ENCODE measurements at regions of chr1 and their contacts with region 1.

Region 1: GRCh38 chr1:112369392-112370285 is 26.4 kb upstream of the CTTNBP2NL start:
- DNase-seq: peak; percentile 71 to 87 (median 83)
- ATAC-seq: peak; percentile 100
- H3K4me3 ChIP-seq: no peak overlapping the region
- H3K4me3 Mint-ChIP-seq: no peak overlapping the region
- H3K27ac ChIP-seq: no peak overlapping the region
- H3K27ac Mint-ChIP-seq: no peak overlapping the region
- H3K4me1 ChIP-seq: no peaks in the 10 kb centered on the region
- H3K4me1 Mint-ChIP-seq: peaks cover 4% of the 10 kb centered on the region
- H3K27me3 ChIP-seq: peaks cover 0 to 4% of the 10 kb centered on the region in 2 experiments
- H3K27me3 Mint-ChIP-seq: peaks cover 42% of the 10 kb centered on the region
- CTCF ChIP-seq: peak; percentile 93

Region 2: DNA sequence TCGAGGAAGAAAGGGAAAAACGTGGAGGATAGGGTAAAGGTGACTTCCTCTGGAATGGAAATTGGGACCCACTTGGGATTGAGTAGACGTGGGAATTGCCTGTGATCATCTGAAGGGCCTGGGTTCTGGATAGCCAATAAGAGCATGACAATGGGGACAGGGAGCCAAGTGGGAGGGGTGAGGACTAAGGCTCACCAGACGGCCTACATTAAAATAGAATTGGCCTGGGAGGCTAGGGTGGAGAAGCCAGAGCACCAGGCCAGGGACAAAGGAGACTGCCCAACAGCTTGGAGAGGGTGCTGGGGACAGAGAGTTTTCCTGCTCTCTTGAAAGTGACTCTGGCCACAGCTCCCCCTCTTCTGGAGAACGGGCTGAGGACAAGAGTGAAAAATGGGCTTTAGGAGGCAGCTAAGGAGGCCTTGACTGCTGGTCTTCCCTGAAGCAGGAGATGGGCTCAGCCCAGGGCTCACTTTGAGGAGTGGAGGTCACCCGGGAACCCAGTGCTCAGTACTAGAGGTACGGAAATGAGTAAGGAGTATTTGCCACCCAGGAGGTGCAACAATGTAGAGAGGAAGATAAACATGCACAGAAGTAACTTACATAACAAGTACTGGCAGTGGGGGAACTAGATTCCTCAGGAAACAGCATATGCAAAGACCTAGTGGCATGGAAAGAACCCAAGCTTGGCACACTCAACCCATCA is 649.2 kb before region 1 on chr1:
- CTCF ChIA-PET with region 1: interaction called, 3 read pairs
- POLR2A ChIA-PET with region 1: no interaction called
- intact Hi-C with region 1: loop called in 1 of 2 experiments (anchors 2 kb)
- DNase-seq: no peak
- ATAC-seq: no peak
- H3K4me3 ChIP-seq: no peak overlapping the region
- H3K4me3 Mint-ChIP-seq: no peak overlapping the region
- H3K27ac ChIP-seq: no peak overlapping the region
- H3K27ac Mint-ChIP-seq: no peak overlapping the region
- H3K4me1 ChIP-seq: no peaks in the 10 kb centered on the region
- H3K4me1 Mint-ChIP-seq: peaks cover 15% of the 10 kb centered on the region
- H3K27me3 ChIP-seq: no peaks in the 10 kb centered on the region
- H3K27me3 Mint-ChIP-seq: no peaks in the 10 kb centered on the region
- CTCF ChIP-seq: no peak

Region 3: DNA sequence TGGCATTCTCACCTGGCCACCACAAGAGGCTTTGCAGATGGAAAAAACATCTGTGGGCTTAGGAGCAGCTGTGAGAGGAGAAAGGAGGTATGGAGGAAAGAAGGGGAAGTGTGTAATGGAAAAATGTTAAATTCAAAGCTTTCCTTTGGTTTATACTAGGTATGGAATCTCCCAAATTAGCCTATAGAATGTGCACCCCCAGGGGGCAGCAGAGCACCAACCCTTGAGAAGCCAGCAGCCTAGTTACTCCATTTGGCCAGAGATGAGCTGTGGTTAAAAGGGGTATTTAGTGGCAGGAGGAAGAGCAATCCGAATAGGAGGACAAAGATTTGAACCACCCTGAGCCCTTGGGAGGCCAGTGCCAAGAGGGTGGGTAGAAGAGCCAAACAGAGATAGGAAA is 71.1 kb before region 1 on chr1:
- CTCF ChIA-PET with region 1: interaction called, 22 read pairs
- POLR2A ChIA-PET with region 1: no interaction called
- intact Hi-C with region 1: loop called (anchors 2 kb)
- DNase-seq: peak in 5 of 9 experiments; percentile 12 to 60 (median 29)
- ATAC-seq: no peak
- H3K4me3 ChIP-seq: no peak overlapping the region
- H3K4me3 Mint-ChIP-seq: no peak overlapping the region
- H3K27ac ChIP-seq: no peak overlapping the region
- H3K27ac Mint-ChIP-seq: no peak overlapping the region
- H3K4me1 ChIP-seq: no peaks in the 10 kb centered on the region
- H3K4me1 Mint-ChIP-seq: no peaks in the 10 kb centered on the region
- H3K27me3 ChIP-seq: no peaks in the 10 kb centered on the region
- H3K27me3 Mint-ChIP-seq: peaks cover 11% of the 10 kb centered on the region
- CTCF ChIP-seq: peak; percentile 40

Region 4: DNA sequence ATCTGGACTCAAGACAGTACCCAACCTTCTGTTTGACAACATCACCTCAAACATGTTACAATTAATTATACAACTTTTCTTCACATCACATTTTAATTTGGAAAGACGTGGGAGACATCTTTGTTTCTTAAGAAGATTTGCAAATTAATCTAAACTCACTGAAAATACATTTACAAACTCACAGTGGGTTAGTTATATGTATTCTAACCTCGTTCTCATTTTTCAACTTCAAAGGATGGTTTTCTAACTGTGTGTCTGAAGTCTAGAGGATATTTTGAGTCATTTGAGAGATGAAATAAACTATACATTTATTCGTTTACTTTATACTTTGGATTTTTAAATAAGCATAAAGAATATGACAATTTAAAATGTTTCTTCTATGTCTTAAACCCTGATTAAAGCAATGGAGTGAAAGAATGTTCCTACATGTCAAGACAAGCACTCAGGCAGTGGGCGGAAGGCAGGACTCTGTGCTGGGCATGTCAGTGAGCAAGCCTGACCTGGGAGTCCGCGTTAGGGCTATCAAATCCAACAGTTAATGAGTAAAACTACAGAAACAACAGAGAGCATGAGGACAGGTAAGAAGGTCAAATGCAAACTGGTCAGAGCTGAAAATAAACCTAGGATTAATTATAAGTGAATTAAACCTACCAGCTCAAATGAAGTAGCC is 50.1 kb before region 1 on chr1:
- CTCF ChIA-PET with region 1: no interaction called
- POLR2A ChIA-PET with region 1: no interaction called
- intact Hi-C with region 1: no loop called
- DNase-seq: no peak
- ATAC-seq: no peak
- H3K4me3 ChIP-seq: no peak overlapping the region
- H3K4me3 Mint-ChIP-seq: no peak overlapping the region
- H3K27ac ChIP-seq: no peak overlapping the region
- H3K27ac Mint-ChIP-seq: no peak overlapping the region
- H3K4me1 ChIP-seq: no peaks in the 10 kb centered on the region
- H3K4me1 Mint-ChIP-seq: peaks cover 2% of the 10 kb centered on the region
- H3K27me3 ChIP-seq: peaks cover 0 to 3% of the 10 kb centered on the region in 2 experiments
- H3K27me3 Mint-ChIP-seq: peaks cover 22% of the 10 kb centered on the region
- CTCF ChIP-seq: no peak

Region 5: DNA sequence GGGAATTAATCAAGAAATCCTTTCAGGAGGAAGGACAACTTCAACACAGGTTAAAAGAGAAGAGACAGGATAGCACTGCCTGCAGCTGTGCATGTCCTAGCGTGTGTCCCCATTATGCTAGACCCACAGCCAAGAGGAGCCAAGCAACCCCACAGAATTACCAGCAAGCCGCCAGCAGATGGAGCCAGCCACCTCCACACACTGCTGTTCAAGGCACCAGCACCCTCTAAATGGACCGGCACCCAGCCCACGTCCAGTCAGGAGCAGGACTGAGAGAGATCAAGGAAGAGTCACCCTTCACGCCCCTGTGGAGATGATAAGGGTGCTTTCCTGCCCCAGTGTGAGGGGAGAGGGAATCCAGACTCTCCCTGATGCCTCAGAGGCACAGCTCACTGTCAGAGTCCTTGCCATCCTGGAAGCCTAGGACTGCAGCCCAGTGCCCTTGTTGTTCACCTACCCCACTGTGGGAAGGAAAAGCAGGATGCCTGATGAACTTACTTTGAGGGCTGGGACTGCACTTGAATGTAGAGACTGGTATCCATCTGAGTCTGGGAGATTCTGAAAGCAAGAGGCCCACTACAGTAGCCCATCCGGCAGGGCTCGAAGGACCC is 10.7 kb before region 1 on chr1:
- CTCF ChIA-PET with region 1: interaction called, 50 read pairs
- POLR2A ChIA-PET with region 1: interaction called, 5 read pairs
- intact Hi-C with region 1: no loop called
- DNase-seq: peak in 4 of 9 experiments; percentile 34 to 48 (median 42)
- ATAC-seq: peak; percentile 55
- H3K4me3 ChIP-seq: no peak overlapping the region
- H3K4me3 Mint-ChIP-seq: no peak overlapping the region
- H3K27ac ChIP-seq: no peak overlapping the region
- H3K27ac Mint-ChIP-seq: no peak overlapping the region
- H3K4me1 ChIP-seq: no peaks in the 10 kb centered on the region
- H3K4me1 Mint-ChIP-seq: no peaks in the 10 kb centered on the region
- H3K27me3 ChIP-seq: no peaks in the 10 kb centered on the region
- H3K27me3 Mint-ChIP-seq: peaks cover 46% of the 10 kb centered on the region
- CTCF ChIP-seq: peak; percentile 53

Region 6: GRCh38 chr1:112383759-112384356 is 14.2 kb after region 1 on chr1:
- CTCF ChIA-PET with region 1: interaction called, 17 read pairs
- POLR2A ChIA-PET with region 1: no interaction called
- intact Hi-C with region 1: no loop called
- DNase-seq: no peak
- ATAC-seq: no peak
- H3K4me3 ChIP-seq: no peak overlapping the region
- H3K4me3 Mint-ChIP-seq: no peak overlapping the region
- H3K27ac ChIP-seq: no peak overlapping the region
- H3K27ac Mint-ChIP-seq: no peak overlapping the region
- H3K4me1 ChIP-seq: no peaks in the 10 kb centered on the region
- H3K4me1 Mint-ChIP-seq: no peaks in the 10 kb centered on the region
- H3K27me3 ChIP-seq: peaks cover 0 to 10% of the 10 kb centered on the region in 2 experiments
- H3K27me3 Mint-ChIP-seq: peaks cover 35% of the 10 kb centered on the region
- CTCF ChIP-seq: no peak